ENCODE measurements at regions of chr18 and their contacts with region 1.

Region 1: GRCh38 chr18:35580701-35581539 is 620 bp upstream of the GALNT1 start:
- DNase-seq: peak; percentile 63
- H3K4me3 ChIP-seq: peak overlapping the region; percentile 85
- H3K27ac ChIP-seq: peak overlapping the region; percentile 97
- H3K4me1 ChIP-seq: peaks cover 36% of the 10 kb centered on the region
- H3K27me3 ChIP-seq: no peaks in the 10 kb centered on the region
- CTCF ChIP-seq: no peak

Region 2: DNA sequence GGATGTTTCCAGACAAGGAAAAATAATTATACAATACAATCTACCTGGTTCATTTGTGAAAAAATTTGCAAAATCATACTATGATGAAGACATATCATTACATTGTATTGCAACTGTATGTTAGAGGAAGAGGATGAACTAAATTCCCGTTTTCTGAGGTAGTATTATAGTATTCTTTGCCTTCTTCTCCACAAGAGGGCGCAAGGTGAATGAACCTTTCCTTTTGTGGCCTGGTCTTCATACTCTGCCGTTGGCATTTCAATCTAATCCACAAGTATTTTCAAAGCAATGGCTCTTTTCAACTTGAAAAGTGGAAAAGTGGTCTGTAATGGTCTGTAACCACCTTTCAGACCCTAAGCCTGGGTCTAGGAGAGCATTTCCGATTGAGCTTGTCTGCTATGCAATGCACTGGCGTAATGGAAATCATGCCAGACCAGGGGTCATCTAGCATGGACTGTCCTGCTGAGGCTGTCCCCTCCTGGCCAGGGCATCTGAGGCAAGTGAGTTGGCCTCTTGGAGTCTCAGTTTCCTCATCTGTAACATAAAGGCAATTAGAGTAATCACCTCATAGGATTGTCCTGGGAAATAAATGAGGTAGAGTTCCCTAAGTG is 172.9 kb before region 1 on chr18:
- intact Hi-C with region 1: loop called (anchors 10 kb)
- DNase-seq: no peak
- H3K4me3 ChIP-seq: no peak overlapping the region
- H3K27ac ChIP-seq: no peak overlapping the region
- H3K4me1 ChIP-seq: peaks cover 12% of the 10 kb centered on the region
- H3K27me3 ChIP-seq: no peaks in the 10 kb centered on the region
- CTCF ChIP-seq: peak; percentile 84

Region 3: DNA sequence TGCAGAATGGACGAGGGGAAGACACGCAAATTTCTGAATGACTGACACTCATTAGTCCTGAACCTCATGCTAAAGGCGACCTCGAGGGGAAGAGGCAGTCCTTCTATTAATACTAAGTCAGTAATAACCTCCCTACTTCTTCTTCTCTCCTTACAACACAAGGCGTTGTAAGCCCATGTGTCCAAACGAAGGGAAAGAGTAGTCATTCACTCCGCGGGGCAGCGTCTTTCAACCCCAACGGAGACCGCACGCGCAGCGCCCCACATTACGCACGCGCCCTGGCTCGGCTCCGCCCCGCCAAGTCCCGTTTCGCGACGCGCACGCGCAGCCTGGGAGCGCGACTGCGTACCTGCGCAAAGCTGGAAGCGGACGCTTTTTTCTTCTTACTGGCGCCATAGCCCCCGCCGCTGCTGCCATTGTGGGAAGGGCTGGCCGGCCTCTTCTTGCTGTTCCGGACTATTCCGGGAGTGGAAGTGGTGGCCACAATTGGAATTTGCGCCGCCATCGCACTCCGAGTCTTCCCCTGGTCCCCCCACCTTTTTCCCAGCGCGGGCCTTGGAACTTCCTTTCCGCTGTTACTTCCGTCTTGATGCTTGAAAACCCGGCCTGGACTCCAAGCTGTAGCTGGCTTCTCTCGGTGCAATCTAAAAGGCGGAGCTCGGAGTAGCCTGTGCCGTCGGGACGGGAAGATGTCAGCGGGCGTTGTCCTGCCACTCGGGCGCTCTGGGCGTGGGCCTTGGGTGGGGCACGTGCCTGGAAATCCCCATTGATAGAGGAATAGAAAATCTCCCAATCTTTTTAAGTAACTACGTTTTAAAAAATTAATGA is 83.3 kb before region 1 on chr18 and contains the start of gene INO80C:
- intact Hi-C with region 1: loop called (anchors 10 kb)
- DNase-seq: peak; percentile 91
- H3K4me3 ChIP-seq: peak within 1 kb of the TSS; percentile 72
- H3K27ac ChIP-seq: peak within 1 kb of the TSS; percentile 96
- H3K4me1 ChIP-seq: peaks cover 24% of the 10 kb centered on the region
- H3K27me3 ChIP-seq: no peaks in the 10 kb centered on the region
- CTCF ChIP-seq: no peak
- total RNA-seq, gene INO80C: 20.3 TPM

Region 4: GRCh38 chr18:35535297-35535696 is 45.6 kb before region 1 on chr18:
- intact Hi-C with region 1: no loop called
- DNase-seq: no peak
- H3K4me3 ChIP-seq: no peak overlapping the region
- H3K27ac ChIP-seq: no peak overlapping the region
- H3K4me1 ChIP-seq: no peaks in the 10 kb centered on the region
- H3K27me3 ChIP-seq: no peaks in the 10 kb centered on the region
- CTCF ChIP-seq: no peak

Measured in left ventricle myocardium inferior (tissue), 1 donor.